Breast epithelium (tissue), 4 donors: ENCODE measurements at regions of chr2 and their contacts with region 1.

Region 1: DNA sequence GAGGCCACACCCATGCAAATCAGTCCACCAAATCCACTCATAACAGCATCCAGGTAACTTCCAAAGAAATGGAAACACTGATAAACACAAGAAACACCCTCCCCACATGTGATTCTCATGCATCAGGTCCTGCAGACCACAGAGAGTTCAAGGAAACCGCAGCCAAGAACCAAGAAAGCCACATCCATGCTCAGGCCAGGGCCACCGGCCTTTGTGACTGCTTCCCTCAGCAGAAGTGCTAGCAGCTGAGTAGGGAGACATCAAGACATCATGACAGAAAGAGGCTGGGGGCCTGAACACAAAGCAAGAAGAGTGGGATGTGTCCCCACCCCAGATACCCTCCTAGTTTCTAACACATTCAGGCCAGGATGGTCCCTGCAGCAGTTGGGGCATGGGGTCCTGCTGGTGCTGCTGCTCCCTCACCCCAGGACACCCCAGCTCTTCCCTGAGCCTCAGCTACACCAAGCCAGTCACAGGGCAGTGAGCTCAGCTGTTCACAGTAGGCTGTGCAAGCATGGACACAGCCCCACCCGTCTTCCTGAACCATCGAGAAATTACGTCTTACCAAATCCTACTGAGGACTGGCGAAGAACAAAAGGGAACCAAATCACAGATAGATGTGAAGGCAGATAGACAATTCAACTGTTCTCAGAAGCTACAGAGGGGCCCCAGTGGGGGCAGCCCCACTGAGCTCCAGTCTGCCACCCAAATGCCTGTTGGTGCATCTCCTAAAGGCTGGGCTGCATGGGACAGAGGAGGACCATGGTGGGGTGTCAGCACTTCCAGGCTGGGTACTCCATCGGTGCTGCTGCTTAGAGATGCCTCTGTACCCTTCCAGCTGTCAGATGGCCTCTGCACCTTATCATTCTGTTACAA is 60.9 kb downstream of the HDAC4 start:
- DNase-seq: no peak
- H3K4me3 ChIP-seq: no peak overlapping the region
- H3K27ac ChIP-seq: no peak overlapping the region
- H3K4me1 ChIP-seq: no peaks in the 10 kb centered on the region
- H3K27me3 ChIP-seq: no peaks in the 10 kb centered on the region
- CTCF ChIP-seq: no peak
- POLR2A ChIP-seq: no peak

Region 2: GRCh38 chr2:237483040-237483721 is 1856.8 kb before region 1 on chr2:
- intact Hi-C with region 1: no loop called
- DNase-seq: peak in 1 of 2 donors; percentile 58
- H3K4me3 ChIP-seq: no peak overlapping the region
- H3K27ac ChIP-seq: peak overlapping the region; percentile 90 to 91
- H3K4me1 ChIP-seq: peaks cover 0 to 6% of the 10 kb centered on the region in 2 donors
- H3K27me3 ChIP-seq: no peaks in the 10 kb centered on the region
- CTCF ChIP-seq: no peak
- POLR2A ChIP-seq: no peak

Region 3: DNA sequence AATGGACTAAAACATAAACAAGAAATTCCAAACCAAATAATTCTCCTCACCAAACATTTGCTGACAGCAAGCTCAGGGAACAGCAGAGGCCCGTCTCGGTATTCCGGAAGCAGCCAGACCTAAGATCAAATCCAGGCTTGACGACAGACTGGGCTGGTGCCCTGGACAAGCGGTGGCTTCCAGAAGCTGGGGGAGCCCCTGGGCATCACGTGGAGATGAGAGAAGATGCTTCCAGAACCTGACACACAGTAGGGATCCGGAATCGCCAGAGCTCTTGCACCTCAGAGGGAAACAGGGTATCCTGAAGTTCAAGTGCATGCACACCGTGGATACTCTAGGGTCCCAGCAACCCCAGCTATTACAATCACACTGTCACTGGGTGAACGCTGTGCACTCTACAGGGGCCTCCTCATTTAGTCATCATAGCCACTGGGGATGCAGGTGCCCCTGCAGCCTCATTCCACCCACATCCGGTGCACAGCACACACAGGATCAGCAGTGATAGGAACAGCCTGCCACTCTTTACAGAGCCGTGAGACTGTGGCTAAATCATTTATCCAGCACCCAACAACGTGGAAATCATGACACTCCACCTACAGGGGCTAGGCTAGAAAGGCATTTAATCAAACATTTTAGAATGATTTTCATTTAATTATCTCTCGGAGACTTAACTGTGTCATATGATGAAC is 41.7 kb before region 1 on chr2:
- intact Hi-C with region 1: loop called (anchors 5 kb)
- DNase-seq: peak in 1 of 2 donors; percentile 27
- H3K4me3 ChIP-seq: no peak overlapping the region
- H3K27ac ChIP-seq: no peak overlapping the region
- H3K4me1 ChIP-seq: no peaks in the 10 kb centered on the region
- H3K27me3 ChIP-seq: no peaks in the 10 kb centered on the region
- CTCF ChIP-seq: no peak
- POLR2A ChIP-seq: no peak

Region 4: GRCh38 chr2:239318790-239319661 is 20.9 kb before region 1 on chr2:
- intact Hi-C with region 1: no loop called
- DNase-seq: peak in 1 of 2 donors; percentile 54
- H3K4me3 ChIP-seq: peak overlapping the region; percentile 27 to 54 (median 31)
- H3K27ac ChIP-seq: peak overlapping the region; percentile 34 to 69
- H3K4me1 ChIP-seq: no peaks in the 10 kb centered on the region
- H3K27me3 ChIP-seq: no peaks in the 10 kb centered on the region
- CTCF ChIP-seq: no peak
- POLR2A ChIP-seq: no peak

Region 5: DNA sequence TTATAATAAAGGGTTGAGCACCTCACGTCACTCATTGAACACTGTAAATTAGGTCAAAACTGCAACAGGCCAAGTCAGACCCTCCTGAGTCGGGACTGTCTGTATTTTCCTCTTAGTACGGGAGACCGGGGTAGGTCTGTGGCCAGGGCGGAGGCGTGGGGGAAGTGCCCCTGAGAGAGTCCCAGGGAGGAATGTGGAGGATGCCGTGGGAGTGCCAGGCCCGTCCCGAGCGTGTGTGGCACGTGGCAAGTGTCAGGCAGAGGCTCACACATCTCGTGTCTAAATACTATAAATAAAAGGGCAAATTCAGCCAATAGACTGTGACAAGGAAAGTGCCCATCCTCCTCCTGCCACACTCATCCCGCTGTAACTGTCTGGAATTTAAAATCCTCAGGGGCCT is 67.1 kb after region 1 on chr2:
- intact Hi-C with region 1: no loop called
- DNase-seq: no peak
- H3K4me3 ChIP-seq: no peak overlapping the region
- H3K27ac ChIP-seq: no peak overlapping the region
- H3K4me1 ChIP-seq: peaks cover 4% of the 10 kb centered on the region in 2 donors
- H3K27me3 ChIP-seq: no peaks in the 10 kb centered on the region
- CTCF ChIP-seq: no peak
- POLR2A ChIP-seq: no peak

Region 6: GRCh38 chr2:239769536-239770245 is 429.7 kb after region 1 on chr2:
- intact Hi-C with region 1: loop called (anchors 5 kb)
- DNase-seq: peak in 1 of 2 donors; percentile 71
- H3K4me3 ChIP-seq: peak overlapping the region in 1 of 3 donors; percentile 15
- H3K27ac ChIP-seq: no peak overlapping the region
- H3K4me1 ChIP-seq: no peaks in the 10 kb centered on the region
- H3K27me3 ChIP-seq: peaks cover 0 to 22% of the 10 kb centered on the region in 2 donors
- CTCF ChIP-seq: no peak
- POLR2A ChIP-seq: no peak